Activated CD4-positive, alpha-beta memory T cell treated with anti-CD3 and anti-CD28 coated beads for 36 hours (primary cell): ENCODE measurements at regions of chr11 and their contacts with region 1.

Region 1: GRCh38 chr11:34357701-34358257 is at the start of gene ABTB2:
- DNase-seq: peak; percentile 98
- H3K4me3 Mint-ChIP-seq: peak within 1 kb of the TSS; percentile 77
- H3K27ac Mint-ChIP-seq: no peak within 1 kb of the TSS
- H3K4me1 Mint-ChIP-seq: peaks cover 28% of the 10 kb centered on the region
- H3K27me3 Mint-ChIP-seq: peaks cover 37% of the 10 kb centered on the region
- total RNA-seq, gene ABTB2: 1.8 to 1.9 TPM

Region 2: GRCh38 chr11:33802414-33802950 is 555.3 kb before region 1 on chr11:
- CTCF ChIA-PET with region 1: no interaction called
- POLR2A ChIA-PET with region 1: no interaction called
- intact Hi-C with region 1: loop called (anchors 5 kb)
- DNase-seq: peak; percentile 49
- H3K4me3 Mint-ChIP-seq: no peak overlapping the region
- H3K27ac Mint-ChIP-seq: no peak overlapping the region
- H3K4me1 Mint-ChIP-seq: peaks cover 8% of the 10 kb centered on the region
- H3K27me3 Mint-ChIP-seq: peaks cover 38% of the 10 kb centered on the region

Region 3: GRCh38 chr11:34051349-34052035 is 306.3 kb before region 1 on chr11 and contains the start of gene CAPRIN1:
- CTCF ChIA-PET with region 1: interaction called, 3 read pairs
- POLR2A ChIA-PET with region 1: no interaction called
- intact Hi-C with region 1: loop called (anchors 1 kb)
- DNase-seq: peak; percentile 88
- H3K4me3 Mint-ChIP-seq: peak within 1 kb of the TSS; percentile 92
- H3K27ac Mint-ChIP-seq: peak within 1 kb of the TSS; percentile 96
- H3K4me1 Mint-ChIP-seq: peaks cover 18% of the 10 kb centered on the region
- H3K27me3 Mint-ChIP-seq: no peaks in the 10 kb centered on the region
- total RNA-seq, gene CAPRIN1: 261 to 264 TPM

Region 4: DNA sequence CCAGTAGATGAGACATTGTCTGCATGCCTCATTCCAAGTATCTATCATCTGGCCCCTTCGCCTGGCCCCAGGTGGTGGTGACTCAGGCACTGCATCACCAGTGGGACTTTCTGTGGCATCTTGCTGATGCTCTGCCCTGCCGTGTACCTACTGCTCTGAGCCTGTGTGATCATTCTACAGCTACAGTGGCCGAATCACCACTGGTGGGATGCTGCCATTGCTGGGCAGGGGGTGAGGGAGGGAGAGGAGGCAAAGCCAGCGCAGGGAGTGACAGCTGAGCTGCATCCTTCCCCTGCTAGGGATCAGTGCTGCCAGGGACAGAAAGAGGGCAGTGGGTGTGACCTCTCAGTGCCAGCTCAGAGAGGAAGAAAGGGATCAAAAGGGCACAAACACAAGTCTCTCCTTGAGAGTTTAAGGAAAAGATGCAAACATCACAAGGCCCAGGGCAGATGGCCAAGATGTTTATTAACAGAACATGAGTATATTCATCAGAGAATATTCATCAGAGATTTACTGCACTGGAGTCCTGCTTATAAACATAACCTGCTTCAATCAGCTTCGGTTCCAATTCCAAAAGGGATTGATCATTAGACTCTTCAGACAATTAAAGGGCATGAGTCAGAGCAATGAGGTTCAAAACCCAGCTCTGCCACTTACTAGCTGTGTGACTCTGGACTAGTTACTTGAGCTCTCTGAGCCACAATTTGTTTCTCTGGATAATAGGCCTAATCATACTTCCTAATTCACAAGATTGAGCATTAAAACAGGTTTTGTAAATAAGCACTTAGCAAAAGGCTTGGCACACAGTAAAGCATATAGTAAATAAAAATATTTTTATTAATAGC is 142.6 kb before region 1 on chr11:
- CTCF ChIA-PET with region 1: interaction called, 3 read pairs
- POLR2A ChIA-PET with region 1: no interaction called
- intact Hi-C with region 1: loop called (anchors 1 kb)
- DNase-seq: peak; percentile 94
- H3K4me3 Mint-ChIP-seq: no peak overlapping the region
- H3K27ac Mint-ChIP-seq: peak overlapping the region; percentile 80
- H3K4me1 Mint-ChIP-seq: peaks cover 21% of the 10 kb centered on the region
- H3K27me3 Mint-ChIP-seq: peaks cover 6% of the 10 kb centered on the region

Region 5: DNA sequence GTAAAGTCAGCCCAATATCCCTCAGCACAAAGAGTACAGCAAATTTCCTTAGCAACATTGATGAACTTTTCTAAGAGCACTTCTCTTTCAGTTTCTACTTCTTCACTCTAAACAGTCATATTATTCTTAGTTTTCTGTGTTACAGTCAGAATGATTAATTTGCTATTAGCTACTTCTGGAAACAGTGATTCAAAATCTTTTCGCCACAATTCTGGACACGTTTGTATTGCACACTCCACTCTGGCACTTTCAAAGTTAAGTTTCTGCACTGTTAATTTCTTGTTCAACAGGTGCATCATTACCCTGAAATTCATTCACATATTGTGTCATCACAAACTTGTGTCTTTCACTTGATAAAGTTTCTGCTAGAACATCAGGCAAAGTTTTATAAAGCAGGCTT is 22.4 kb before region 1 on chr11:
- CTCF ChIA-PET with region 1: interaction called, 4 read pairs
- POLR2A ChIA-PET with region 1: no interaction called
- intact Hi-C with region 1: loop called (anchors 1 kb)
- DNase-seq: no peak
- H3K4me3 Mint-ChIP-seq: no peak overlapping the region
- H3K27ac Mint-ChIP-seq: no peak overlapping the region
- H3K4me1 Mint-ChIP-seq: peaks cover 15% of the 10 kb centered on the region
- H3K27me3 Mint-ChIP-seq: peaks cover 18% of the 10 kb centered on the region